Right ventricle myocardium inferior (tissue), 1 donor: ENCODE measurements at regions of chr7 and their contacts with region 1.

Region 1: DNA sequence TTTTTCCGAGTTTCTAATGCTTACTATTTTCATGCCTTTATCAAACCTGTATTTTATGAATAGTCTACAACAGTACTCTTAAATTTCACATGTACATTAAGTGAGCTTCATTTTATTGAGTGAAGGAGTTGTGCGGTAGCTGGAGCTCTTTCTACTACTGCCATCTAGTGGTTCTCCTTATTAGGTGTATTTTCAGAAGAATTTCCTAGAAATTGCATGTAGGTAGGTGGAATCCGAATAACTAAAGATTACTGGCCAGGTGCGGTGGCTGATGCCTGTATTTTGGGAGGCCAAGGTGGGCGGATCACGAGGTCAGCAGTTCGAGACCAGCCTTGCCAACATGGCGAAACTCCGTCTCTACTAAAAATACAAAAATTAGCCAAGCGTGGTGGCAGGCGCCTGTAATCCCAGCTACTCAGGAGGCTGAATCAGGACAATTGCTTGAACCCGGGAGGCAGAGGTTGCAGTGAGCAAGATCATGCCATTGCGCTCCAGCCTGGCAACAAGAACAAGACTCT is 38.3 kb downstream of the LRRC72 start:
- DNase-seq: no peak
- ATAC-seq: no peak

Region 2: DNA sequence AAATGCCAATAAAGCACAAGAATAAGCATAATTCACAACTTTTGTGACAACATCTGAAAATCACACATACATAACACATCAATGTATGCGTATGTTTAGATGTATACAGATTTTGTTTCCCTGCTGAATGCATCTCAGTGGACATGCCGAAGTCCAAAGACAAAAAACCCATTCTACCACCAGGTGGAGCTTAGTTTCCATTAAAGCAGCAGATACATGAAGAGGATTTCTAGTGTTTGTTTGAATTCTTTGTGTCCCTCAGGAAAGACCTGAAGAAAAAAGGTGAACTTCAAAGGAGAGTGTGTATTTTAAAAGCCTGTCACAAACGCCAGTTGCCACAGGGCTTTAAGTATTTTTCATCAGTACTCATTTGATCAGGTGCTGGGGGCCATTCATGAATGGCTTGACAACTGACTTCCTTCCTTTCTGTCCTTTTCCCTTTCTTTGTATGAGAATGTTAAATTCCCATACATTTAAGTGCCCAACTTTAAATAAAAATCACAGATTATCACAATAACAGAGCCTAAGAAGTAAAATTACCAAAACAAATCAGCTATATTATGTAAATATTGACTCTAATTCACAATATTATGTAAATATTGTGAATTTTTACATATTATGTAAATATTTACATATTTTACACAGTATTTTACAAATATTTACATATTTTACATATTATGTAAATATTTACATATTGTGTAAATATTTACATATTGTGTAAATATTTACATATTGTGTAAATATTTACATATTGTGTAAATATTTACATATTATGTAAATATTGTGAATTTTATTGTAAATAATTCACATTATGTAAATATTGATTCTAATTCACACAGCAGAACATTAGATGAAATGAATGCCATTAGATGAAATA is 486.7 kb before region 1 on chr7:
- intact Hi-C with region 1: loop called (anchors 2 kb)
- DNase-seq: no peak
- ATAC-seq: no peak

Region 3: DNA sequence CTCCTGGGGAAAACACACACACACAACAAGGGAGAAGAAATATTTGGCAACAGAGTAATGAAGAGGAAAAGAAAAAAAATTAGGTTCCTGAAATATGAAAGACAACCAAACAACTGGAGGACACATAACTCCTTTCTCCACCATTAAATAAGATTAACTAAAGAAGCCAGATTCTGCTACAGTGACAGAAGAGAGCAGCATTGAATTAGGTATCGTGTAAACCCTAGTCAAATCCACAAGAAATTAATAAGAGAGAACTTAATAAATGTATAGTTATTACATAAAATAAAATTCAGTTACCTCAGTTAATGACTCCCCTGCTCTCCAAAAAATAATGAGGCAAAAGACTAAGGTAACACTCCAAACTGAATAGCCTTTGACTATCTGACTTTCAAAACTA is 450.3 kb before region 1 on chr7:
- intact Hi-C with region 1: loop called (anchors 2 kb)
- DNase-seq: no peak
- ATAC-seq: no peak

Region 4: DNA sequence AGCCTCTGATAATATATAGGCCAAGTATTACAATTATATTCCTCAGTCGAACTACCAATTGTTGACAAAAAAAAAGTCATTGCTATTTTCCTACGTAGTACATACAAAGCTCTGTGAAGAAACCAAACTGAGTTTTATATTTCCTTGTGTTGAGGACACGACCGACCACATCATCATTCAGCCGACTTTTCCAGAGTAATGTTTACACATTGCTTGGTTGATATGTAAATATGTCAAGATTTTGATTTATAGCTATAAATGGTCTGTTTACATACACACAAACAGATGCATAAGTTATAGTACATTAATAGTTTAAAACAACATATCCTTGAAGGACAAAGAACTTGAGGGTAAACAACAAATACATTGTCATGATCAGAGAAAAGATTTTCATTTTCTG is 265.1 kb before region 1 on chr7:
- intact Hi-C with region 1: loop called (anchors 10 kb)
- DNase-seq: no peak
- ATAC-seq: no peak

Region 5: GRCh38 chr7:16431646-16432424 is 133.1 kb before region 1 on chr7:
- intact Hi-C with region 1: loop called (anchors 2 kb)
- DNase-seq: no peak
- ATAC-seq: peak; percentile 68